Caco-2 (cell line): ENCODE measurements at regions of chr10 and their contacts with region 1.

Region 1: DNA sequence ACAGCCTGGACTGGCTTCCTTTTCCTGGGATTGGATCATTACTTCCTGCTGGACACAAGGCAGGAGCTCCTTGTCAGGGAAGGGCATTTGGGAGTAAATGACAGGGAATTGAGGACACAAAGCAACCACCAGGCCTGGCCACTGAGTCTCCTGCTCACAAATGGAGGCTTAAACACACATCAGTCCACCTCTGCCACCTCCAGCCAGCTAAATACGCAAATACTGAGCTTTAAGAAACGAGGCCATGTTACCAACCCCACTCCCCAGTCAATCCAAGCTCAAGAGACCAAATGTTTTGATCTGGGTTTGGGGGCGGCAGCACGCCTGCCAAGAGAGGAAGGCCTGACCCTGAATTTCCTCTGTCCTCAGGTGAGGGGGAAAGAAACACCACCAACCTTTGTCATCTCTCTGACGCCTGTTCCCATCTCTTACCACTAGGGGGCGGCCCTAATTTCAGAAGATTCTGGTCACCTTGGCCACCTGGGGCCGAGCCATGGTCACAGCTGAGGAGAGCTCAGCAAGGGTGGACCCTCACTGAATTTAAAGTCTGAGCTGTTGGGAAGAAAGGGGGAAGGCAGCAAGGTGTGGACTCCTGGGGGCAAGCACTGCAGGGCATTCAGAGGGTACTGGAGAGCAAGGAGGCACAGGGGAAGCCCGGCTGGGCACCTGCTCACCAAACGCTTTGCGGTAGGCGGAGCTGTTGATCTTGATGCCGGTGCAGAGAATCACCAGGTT is 16.5 kb downstream of the AIFM2 start:
- DNase-seq: peak; percentile 76 to 87
- H3K4me3 ChIP-seq: no peak overlapping the region
- H3K4me3 Mint-ChIP-seq: no peak overlapping the region
- H3K27ac Mint-ChIP-seq: peak overlapping the region; percentile 7
- H3K4me1 ChIP-seq: no peaks in the 10 kb centered on the region
- H3K4me1 Mint-ChIP-seq: no peaks in the 10 kb centered on the region
- H3K27me3 ChIP-seq: no peaks in the 10 kb centered on the region
- H3K27me3 Mint-ChIP-seq: no peaks in the 10 kb centered on the region
- CTCF ChIP-seq: peak; percentile 97 to 99

Region 2: GRCh38 chr10:70093335-70093944 is 22.7 kb before region 1 on chr10:
- CTCF ChIA-PET with region 1: interaction called, 22 read pairs
- POLR2A ChIA-PET with region 1: no interaction called
- intact Hi-C with region 1: loop called (anchors 2 kb)
- DNase-seq: no peak
- H3K4me3 ChIP-seq: no peak overlapping the region
- H3K4me3 Mint-ChIP-seq: no peak overlapping the region
- H3K27ac Mint-ChIP-seq: peak overlapping the region; percentile 43
- H3K4me1 ChIP-seq: peaks cover 54% of the 10 kb centered on the region
- H3K4me1 Mint-ChIP-seq: peaks cover 45% of the 10 kb centered on the region
- H3K27me3 ChIP-seq: no peaks in the 10 kb centered on the region
- H3K27me3 Mint-ChIP-seq: no peaks in the 10 kb centered on the region
- CTCF ChIP-seq: no peak